Mammary epithelial cell (primary cell): ENCODE measurements at regions of chr6 and their contacts with region 1.

Region 1: GRCh38 chr6:159174263-159174969 is 5.2 kb downstream of the FNDC1 start:
- DNase-seq: peak; percentile 46
- H3K4me3 ChIP-seq: no peak overlapping the region
- H3K27ac ChIP-seq: no peak overlapping the region
- H3K4me1 ChIP-seq: peaks cover 10% of the 10 kb centered on the region
- H3K27me3 ChIP-seq: peaks cover 18% of the 10 kb centered on the region
- CTCF ChIP-seq: peak; percentile 97 to 100

Region 2: DNA sequence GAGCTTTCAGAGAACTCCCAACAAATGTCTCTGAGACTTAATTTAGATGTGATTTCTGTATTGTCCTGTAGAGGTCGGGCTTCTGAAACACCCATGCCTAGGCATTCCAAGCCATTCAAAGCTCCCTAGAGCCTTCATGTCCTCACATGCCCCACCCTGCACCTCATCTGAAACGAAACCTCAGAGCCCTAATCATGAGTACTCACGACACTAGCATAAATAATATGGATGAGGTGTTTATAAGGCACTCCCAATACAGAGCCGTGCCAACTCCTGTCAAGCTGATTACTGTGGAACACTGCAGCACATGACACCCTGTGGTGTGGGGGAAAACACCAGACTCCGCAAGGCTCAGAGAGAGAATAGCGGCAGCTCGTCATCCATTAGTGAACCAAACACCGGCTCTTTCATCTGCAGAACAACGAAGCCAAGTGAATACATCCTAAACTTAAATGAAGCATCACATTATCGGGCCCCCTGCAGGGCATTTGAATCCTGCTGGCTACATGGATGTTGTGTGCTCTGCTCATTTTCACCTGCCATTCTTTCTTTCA is 78.6 kb after region 1 on chr6:
- CTCF ChIA-PET with region 1: no interaction called
- dilution Hi-C with region 1: no loop called
- in situ Hi-C with region 1: no loop called
- intact Hi-C with region 1: loop called (anchors 1 kb)
- DNase-seq: peak; percentile 94
- H3K4me3 ChIP-seq: peak overlapping the region; percentile 30 to 41 (median 37)
- H3K27ac ChIP-seq: peak overlapping the region; percentile 21
- H3K4me1 ChIP-seq: peaks cover 4% of the 10 kb centered on the region
- H3K27me3 ChIP-seq: no peaks in the 10 kb centered on the region
- CTCF ChIP-seq: peak; percentile 70 to 80

Region 3: DNA sequence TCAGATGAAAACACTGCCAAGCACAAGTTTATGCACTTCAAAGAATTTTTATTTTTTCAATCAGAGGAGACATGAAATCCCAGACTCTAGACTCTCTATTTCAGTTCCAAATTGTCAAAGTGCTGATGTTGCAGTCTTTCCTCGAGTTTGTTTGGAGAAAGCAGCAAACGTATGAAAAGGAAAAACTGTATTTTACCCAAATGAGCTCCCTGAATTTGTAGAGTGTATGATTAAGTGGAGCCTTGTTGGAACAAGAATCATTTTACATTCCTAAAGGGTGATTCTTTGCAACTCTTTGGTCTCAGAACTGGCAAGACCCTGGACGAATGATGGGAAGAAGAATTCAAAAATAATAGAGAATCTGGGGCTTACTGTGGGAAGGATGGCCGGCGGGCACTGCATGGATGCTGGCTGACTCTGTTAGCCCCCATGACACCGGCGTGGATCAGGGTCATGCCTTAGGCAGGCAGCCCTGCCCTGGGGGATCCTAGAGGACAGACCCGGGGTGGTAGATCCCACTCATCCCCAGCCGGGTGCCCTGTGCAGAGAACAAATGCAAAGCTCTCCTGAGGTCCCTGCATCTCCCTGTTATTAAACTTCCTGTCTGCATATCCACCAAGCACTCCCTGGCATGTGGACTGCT is 202.2 kb after region 1 on chr6:
- CTCF ChIA-PET with region 1: no interaction called
- dilution Hi-C with region 1: no loop called
- in situ Hi-C with region 1: no loop called
- intact Hi-C with region 1: loop called (anchors 1 kb)
- DNase-seq: no peak
- H3K4me3 ChIP-seq: no peak overlapping the region
- H3K27ac ChIP-seq: no peak overlapping the region
- H3K4me1 ChIP-seq: no peaks in the 10 kb centered on the region
- H3K27me3 ChIP-seq: no peaks in the 10 kb centered on the region
- CTCF ChIP-seq: no peak

Region 4: GRCh38 chr6:159608961-159609651 is 434.7 kb after region 1 on chr6:
- CTCF ChIA-PET with region 1: interaction called, 3 read pairs
- dilution Hi-C with region 1: no loop called
- in situ Hi-C with region 1: loop called in 1 of 2 experiments (anchors 10 kb)
- intact Hi-C with region 1: loop called (anchors 1 kb)
- DNase-seq: peak; percentile 50
- H3K4me3 ChIP-seq: no peak overlapping the region
- H3K27ac ChIP-seq: no peak overlapping the region
- H3K4me1 ChIP-seq: no peaks in the 10 kb centered on the region
- H3K27me3 ChIP-seq: no peaks in the 10 kb centered on the region
- CTCF ChIP-seq: peak; percentile 92 to 98

Region 5: DNA sequence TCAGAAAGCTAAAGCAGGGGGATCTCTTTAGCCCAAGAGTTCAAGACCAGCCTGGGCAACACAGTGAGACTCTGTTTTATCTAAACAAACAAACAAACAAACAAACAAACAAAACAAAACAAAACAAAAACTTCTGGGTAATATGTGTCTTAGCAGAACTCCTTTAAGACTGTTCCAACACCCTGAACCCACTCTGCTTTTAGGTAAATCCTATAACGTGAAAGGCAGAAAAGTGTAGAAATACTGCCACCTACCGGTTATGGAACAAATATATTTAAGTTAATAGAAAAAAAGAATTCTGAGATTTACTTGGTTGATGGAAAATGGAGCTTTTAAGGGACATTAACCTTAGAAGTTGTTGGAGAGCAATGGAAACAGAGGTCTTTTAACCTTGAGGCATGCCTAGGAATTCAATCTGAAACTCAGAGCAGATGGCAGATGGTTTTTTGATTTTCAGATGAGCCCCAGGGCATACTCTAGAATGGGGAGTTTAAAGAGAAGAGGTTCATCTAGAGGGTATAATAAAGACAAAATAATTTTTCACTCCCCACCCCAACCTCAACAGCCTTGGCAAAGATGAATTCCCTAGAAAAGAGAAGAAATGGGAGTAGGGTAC is 480.2 kb after region 1 on chr6:
- CTCF ChIA-PET with region 1: no interaction called
- dilution Hi-C with region 1: loop called (anchors 5 kb)
- in situ Hi-C with region 1: loop called in 1 of 2 experiments (anchors 10 kb)
- intact Hi-C with region 1: loop called (anchors 2 kb)
- DNase-seq: peak; percentile 24
- H3K4me3 ChIP-seq: no peak overlapping the region
- H3K27ac ChIP-seq: no peak overlapping the region
- H3K4me1 ChIP-seq: no peaks in the 10 kb centered on the region
- H3K27me3 ChIP-seq: no peaks in the 10 kb centered on the region
- CTCF ChIP-seq: peak; percentile 43 to 58